AG04450 (cell line): ENCODE measurements at regions of chr10 and their contacts with region 1.

Region 1: DNA sequence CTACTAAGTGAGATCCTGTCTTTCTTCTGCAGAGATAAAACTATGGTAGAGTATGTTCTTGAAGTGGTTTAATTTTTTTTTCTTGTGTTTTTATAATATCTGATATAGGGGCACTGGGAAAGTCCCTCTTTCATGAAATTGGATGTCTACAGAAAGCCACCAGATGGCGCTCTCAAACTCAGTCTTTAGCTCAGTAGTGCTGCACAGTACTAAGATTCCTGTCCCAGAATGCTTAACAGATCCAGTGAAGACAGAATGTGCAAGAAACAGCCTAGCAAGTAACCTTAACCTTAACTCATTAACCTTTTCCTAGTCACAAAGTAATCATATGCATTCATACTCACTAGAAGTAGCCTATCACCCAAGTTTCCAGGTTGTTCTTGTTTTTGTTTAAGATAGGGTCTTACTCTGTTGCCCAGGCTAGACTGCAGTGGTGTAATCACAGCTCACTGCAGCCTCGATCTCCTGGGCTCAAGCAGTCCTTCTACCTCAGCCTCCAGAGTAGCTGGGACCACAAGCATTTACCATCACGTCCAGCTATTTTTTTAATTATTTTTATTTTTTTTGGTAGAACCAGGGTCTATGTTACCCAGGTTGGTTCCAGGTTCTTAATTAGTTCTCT is 56.7 kb downstream of the IDE start:
- DNase-seq: peak; percentile 61
- H3K4me3 ChIP-seq: no peak overlapping the region
- H3K27ac ChIP-seq: no peak overlapping the region
- H3K27me3 ChIP-seq: no peaks in the 10 kb centered on the region
- CTCF ChIP-seq: peak; percentile 82

Region 2: DNA sequence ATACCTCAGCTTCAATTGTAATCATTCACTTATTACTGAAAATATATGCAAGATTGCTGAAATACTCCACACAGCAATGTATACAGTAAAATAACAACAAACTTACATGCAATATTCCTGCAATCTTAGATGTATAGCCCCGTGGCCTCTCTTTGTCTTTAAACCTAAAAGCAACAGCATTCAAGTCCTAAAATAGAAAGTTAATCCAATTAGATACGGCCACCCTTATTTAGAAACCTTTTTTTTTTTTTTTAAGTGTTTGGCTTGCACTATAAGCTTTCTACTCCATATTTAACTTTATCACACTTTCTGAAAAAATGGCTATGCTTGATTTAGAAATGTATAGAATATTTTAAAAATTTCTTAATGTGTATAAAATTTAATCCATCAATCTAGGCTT is 10.8 kb before region 1 on chr10:
- CTCF ChIA-PET with region 1: interaction called, 10 read pairs
- POLR2A ChIA-PET with region 1: no interaction called
- DNase-seq: no peak
- H3K4me3 ChIP-seq: no peak overlapping the region
- H3K27ac ChIP-seq: no peak overlapping the region
- H3K27me3 ChIP-seq: no peaks in the 10 kb centered on the region
- CTCF ChIP-seq: no peak

Region 3: GRCh38 chr10:92530421-92530820 is 13.3 kb after region 1 on chr10:
- CTCF ChIA-PET with region 1: interaction called, 32 read pairs
- POLR2A ChIA-PET with region 1: no interaction called
- DNase-seq: no peak
- H3K4me3 ChIP-seq: no peak overlapping the region
- H3K27ac ChIP-seq: no peak overlapping the region
- H3K27me3 ChIP-seq: no peaks in the 10 kb centered on the region
- CTCF ChIP-seq: no peak

Region 4: DNA sequence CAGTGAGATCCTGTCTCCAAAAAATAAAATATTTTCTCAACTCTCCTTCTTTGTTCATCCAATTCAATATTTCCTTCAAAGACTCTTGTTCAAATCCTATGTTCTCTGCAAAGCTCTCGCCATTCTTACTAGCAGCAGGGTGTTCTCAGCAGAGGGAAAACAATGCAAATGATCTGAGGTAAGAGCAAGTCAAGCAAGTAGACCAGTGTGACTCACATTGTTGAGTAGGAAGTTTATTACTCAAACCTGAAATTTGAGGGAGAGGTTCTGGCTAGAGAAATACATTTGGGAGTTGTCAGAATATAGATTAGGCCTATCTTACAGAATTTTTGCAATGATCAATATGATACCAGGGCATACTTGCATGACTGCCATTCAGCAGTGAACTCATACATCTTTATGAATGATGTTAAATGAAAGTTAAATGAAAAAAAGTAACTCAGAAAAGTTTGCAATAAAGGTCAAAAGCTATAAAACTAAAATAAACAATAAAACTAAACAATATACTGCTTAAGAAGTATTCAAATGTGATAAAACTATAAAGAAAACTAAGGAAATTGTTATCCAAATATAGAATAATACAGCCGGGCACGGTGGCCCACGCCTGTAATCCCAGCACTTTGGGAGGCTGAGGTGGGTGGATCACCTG is 50.9 kb after region 1 on chr10:
- CTCF ChIA-PET with region 1: interaction called, 78 read pairs
- POLR2A ChIA-PET with region 1: no interaction called
- DNase-seq: no peak
- H3K4me3 ChIP-seq: no peak overlapping the region
- H3K27ac ChIP-seq: no peak overlapping the region
- H3K27me3 ChIP-seq: no peaks in the 10 kb centered on the region
- CTCF ChIP-seq: no peak

Region 5: DNA sequence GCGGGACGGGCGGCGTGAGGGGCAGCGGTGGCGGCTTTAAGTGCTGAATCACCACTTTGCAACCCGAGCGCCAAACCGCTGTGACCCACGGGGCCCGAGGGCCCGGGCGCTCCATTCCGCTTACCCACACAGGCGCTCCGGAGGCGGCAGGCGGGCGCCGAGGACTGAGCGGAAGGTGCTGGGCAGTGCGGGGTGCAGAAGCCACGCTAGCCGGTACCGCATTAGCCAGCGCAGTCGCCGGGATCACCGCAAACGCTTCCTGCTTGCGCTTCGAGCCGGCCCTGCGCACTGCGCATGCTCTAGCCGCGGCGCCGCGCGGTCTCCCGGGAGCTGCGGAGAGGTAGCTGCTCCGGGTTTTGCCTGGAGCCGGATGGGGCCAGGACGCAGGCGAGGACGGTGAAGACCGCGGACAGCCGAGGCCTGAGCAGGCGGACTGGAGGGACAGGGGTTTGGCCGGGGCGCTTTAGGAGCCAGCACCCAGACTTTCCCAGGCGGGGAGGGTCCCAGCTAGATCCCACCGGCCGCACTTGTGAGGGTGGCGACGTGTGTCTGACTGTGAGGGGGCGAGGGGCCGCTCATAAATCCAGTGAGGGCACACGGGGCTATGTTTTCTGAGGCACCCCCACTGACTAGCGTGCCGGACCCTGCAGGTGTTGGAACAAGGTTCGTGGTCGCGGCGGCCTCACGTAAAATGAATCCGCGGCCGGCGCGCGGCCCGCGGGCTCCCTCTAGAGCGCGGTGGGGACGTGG is 56.8 kb after region 1 on chr10 and contains the start of gene IDE:
- CTCF ChIA-PET with region 1: interaction called, 78 read pairs
- POLR2A ChIA-PET with region 1: interaction called, 8 read pairs
- DNase-seq: peak; percentile 66
- H3K4me3 ChIP-seq: peak within 1 kb of the TSS; percentile 90
- H3K27ac ChIP-seq: peak within 1 kb of the TSS; percentile 98
- H3K27me3 ChIP-seq: no peaks in the 10 kb centered on the region
- CTCF ChIP-seq: peak; percentile 81
- polyA plus RNA-seq, gene IDE: 31.2 and 39.0 TPM in 2 replicates

Region 6: DNA sequence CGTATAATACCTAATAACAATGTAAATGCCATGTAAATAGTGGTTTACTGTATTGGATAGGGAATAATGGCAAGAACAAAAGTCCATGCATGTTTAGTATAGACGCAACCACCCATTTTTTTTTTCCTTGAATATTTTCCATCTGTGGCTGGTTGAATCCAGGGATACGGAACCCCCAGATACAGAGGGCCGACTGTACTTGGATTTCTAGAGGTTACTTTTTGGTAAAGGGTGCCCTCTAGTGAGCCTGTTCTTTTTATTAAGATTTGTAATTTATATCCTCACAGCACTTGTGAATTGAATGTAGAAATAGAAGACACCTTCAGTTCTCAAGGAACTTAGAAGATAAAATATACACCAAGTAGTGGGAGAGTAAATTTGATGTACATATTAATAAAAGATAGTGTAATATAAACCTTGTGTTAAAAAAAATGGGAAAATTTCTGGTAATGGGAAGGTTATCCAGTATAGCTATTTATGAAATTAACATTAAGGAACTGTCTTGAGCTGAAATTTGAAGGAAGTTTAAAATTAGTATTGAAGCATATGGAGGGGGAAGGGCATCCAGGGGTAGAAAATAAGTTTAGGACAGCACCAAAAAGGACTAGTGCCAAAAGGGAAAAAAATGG is 363.2 kb after region 1 on chr10:
- CTCF ChIA-PET with region 1: interaction called, 12 read pairs
- POLR2A ChIA-PET with region 1: no interaction called
- DNase-seq: peak; percentile 24
- H3K4me3 ChIP-seq: no peak overlapping the region
- H3K27ac ChIP-seq: no peak overlapping the region
- H3K27me3 ChIP-seq: no peaks in the 10 kb centered on the region
- CTCF ChIP-seq: peak; percentile 53